ENCODE measurements at regions of chr1 and their contacts with region 1.

Region 1: GRCh38 chr1:55021965-55022546 is 17.3 kb upstream of the PCSK9 start:
- DNase-seq: peak; percentile 72
- H3K4me3 ChIP-seq: no peak overlapping the region
- H3K27ac ChIP-seq: no peak overlapping the region
- H3K4me1 ChIP-seq: no peaks in the 10 kb centered on the region
- H3K27me3 ChIP-seq: peaks cover 0 to 2% of the 10 kb centered on the region in 2 experiments
- CTCF ChIP-seq: peak; percentile 94 to 98
- POLR2A ChIP-seq: no peak

Region 2: GRCh38 chr1:54671985-54672608 is 350.0 kb before region 1 on chr1:
- CTCF ChIA-PET with region 1: interaction called, 3 read pairs
- POLR2A ChIA-PET with region 1: no interaction called
- dilution Hi-C with region 1: no loop called
- intact Hi-C with region 1: loop called (anchors 1 kb)
- DNase-seq: peak; percentile 49
- H3K4me3 ChIP-seq: no peak overlapping the region
- H3K27ac ChIP-seq: no peak overlapping the region
- H3K4me1 ChIP-seq: no peaks in the 10 kb centered on the region
- H3K27me3 ChIP-seq: peaks cover 0 to 2% of the 10 kb centered on the region in 2 experiments
- CTCF ChIP-seq: peak; percentile 63 to 78
- POLR2A ChIP-seq: no peak

Region 3: DNA sequence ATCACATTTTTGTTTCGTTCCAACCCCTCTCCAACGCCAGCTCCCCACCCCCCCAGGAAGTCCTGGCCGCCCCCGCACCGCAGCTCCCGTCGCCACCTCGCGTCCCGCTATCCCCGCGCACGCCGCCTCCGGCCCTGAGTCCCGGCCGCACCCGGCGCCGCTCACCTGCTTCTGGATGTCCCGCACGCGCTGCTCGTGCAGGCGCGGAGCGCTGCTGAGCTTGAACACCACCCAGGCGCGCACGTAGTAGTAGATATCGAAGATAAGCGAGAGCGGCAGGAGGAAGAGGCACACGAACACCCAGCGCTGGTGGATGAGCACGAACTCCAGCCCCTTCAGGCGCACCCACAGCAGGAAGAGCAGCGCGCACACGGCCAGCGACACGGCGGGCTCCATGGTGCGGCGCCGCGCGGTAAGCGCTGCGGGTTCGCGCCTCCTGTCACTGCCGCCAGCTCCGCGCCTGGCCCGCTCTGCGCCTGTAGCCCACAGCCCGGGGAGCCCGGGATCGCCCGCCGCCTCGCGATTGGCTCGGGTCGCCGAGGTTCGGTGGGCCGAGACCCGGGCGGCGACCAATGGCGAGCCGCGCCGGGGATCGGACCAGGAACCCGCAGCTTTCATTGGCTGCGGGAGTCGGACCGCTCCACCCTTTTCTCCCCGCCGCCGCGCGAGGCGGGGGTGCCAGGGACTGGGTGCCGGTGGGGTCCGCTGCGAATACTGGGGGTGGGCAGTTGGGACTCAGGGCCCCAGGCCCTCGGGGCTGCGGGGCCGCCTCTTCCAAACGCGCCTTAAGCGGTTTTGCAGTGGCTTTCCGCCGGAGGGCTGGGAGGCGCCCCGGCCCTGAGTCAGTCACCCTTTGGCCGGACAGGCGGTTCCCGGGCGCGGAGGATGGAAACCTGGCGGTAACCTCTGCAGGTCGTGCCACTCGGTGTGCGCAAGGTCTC is 135.1 kb before region 1 on chr1 and contains the start of gene DHCR24:
- CTCF ChIA-PET with region 1: interaction called, 7 read pairs
- POLR2A ChIA-PET with region 1: no interaction called
- dilution Hi-C with region 1: no loop called
- intact Hi-C with region 1: loop called (anchors 2 kb)
- DNase-seq: peak; percentile 85
- H3K4me3 ChIP-seq: peak within 1 kb of the TSS; percentile 52 to 78 (median 56)
- H3K27ac ChIP-seq: peak within 1 kb of the TSS; percentile 25
- H3K4me1 ChIP-seq: peaks cover 32% of the 10 kb centered on the region
- H3K27me3 ChIP-seq: no peaks in the 10 kb centered on the region
- CTCF ChIP-seq: no peak
- POLR2A ChIP-seq: peak; percentile 77
- total RNA-seq, gene DHCR24: 223 and 229 TPM in 2 replicates

Region 4: DNA sequence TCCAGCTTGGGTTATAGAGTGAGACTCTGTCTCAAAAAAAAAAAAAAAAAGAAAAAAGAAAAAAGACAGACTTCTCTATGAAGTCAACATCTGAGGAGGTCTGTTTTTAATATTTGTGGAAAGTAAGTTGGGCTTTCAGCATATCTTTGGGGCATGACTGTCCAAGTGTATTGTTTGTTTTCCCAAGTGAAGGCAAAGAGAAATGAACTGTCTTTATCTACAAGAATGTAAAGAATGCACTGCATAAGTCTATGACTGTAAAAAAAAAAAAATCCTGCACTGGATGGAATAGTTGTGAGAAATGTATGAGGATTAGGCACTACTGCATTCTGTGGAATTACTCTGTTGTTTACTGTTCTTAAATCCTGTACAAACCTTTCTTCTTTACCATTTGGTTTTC is 87.2 kb before region 1 on chr1:
- CTCF ChIA-PET with region 1: interaction called, 35 read pairs
- POLR2A ChIA-PET with region 1: no interaction called
- dilution Hi-C with region 1: no loop called
- intact Hi-C with region 1: no loop called
- DNase-seq: peak; percentile 37
- H3K4me3 ChIP-seq: no peak overlapping the region
- H3K27ac ChIP-seq: no peak overlapping the region
- H3K4me1 ChIP-seq: peaks cover 2% of the 10 kb centered on the region
- H3K27me3 ChIP-seq: peaks cover 2 to 10% of the 10 kb centered on the region in 2 experiments
- CTCF ChIP-seq: no peak
- POLR2A ChIP-seq: no peak

Region 5: GRCh38 chr1:54950369-54951163 is 71.5 kb before region 1 on chr1:
- CTCF ChIA-PET with region 1: interaction called, 587 read pairs
- POLR2A ChIA-PET with region 1: interaction called, 5 read pairs
- dilution Hi-C with region 1: no loop called
- intact Hi-C with region 1: loop called (anchors 1 kb)
- DNase-seq: peak; percentile 87
- H3K4me3 ChIP-seq: no peak overlapping the region
- H3K27ac ChIP-seq: peak overlapping the region; percentile 15
- H3K4me1 ChIP-seq: peaks cover 25% of the 10 kb centered on the region
- H3K27me3 ChIP-seq: peaks cover 0 to 1% of the 10 kb centered on the region in 2 experiments
- CTCF ChIP-seq: peak; percentile 71 to 79
- POLR2A ChIP-seq: no peak

Region 6: DNA sequence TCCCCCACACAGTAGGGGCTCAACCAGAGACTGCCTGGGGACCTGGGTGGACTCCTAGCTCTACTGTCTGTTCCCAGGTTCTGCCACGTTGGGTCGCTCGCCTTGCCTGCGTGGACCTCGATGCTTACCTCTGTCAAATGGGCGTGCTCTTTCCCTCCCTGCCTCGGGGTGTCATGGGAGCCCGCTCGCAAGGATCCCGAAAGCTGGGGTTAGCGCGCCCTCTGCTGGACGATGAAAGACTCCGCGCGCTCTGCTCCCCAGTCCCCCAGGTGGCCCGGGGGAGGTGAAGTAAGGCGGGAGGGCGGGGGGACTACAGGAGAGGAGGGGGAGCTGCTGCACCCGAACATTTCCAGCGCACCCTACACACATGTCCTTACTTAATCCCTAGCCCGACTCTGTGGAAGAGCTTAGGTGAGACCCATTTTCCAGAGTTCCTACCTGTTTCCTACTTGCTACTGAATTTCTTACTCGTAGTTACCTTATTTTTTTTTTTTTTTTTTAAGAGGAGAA is 25.6 kb before region 1 on chr1:
- CTCF ChIA-PET with region 1: interaction called, 19 read pairs
- POLR2A ChIA-PET with region 1: no interaction called
- dilution Hi-C with region 1: no loop called
- intact Hi-C with region 1: loop called (anchors 1 kb)
- DNase-seq: peak; percentile 59
- H3K4me3 ChIP-seq: no peak overlapping the region
- H3K27ac ChIP-seq: no peak overlapping the region
- H3K4me1 ChIP-seq: peaks cover 3% of the 10 kb centered on the region
- H3K27me3 ChIP-seq: peaks cover 12 to 14% of the 10 kb centered on the region in 2 experiments
- CTCF ChIP-seq: peak; percentile 77 to 87
- POLR2A ChIP-seq: no peak

Region 7: DNA sequence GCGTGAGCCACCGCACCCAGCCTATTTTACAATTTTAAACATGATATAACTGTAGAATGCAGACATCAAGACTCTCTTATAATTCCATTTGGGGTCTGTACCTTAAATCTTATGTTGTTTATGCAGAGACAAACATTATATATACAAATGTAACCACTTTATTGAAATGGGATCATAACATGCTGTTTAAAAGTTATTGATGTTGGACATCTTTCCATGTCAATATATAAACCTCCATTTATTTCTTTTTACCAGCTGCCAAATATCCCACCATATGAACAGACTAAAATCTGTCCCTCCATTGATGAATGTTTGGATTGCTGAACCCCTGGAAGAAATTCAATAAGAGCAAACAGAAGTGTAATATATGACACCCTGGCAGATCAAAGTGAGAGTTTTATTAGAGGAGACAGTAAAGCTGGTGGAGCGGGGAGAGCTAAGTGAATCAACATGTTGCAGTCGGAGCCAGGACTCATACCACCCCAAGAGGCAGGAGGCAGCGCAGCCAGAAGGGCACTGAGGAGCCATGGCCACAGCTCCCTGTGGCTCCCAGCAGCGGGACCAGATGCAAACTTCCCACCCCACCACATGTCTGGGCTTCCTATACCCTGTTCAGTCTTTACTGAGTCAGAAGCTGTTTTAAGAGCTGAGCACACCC is 12.5 kb after region 1 on chr1:
- CTCF ChIA-PET with region 1: interaction called, 12 read pairs
- POLR2A ChIA-PET with region 1: no interaction called
- dilution Hi-C with region 1: no loop called
- intact Hi-C with region 1: no loop called
- DNase-seq: no peak
- H3K4me3 ChIP-seq: no peak overlapping the region
- H3K27ac ChIP-seq: no peak overlapping the region
- H3K4me1 ChIP-seq: peaks cover under 1% of the 10 kb centered on the region
- H3K27me3 ChIP-seq: peaks cover 42 to 54% of the 10 kb centered on the region in 2 experiments
- CTCF ChIP-seq: no peak
- POLR2A ChIP-seq: no peak

Region 8: DNA sequence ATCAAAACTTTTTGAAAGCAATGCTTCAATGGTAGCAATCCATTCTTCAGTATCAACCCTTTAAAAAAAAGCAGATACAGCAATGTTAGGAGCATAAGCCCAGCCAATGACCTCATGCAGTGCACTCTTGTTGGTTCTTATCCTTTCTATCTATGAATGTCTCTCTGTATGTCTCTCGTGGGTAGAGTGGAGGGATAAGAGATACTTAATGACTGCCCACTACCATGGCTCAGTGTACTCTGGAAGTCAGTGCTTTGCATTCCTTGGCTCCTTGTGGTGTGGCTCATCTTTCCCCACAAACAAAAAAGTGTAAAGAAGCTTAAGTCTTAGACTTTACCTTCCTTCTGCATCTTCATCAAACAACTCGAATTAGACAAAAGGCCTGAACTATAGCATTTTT is 67.6 kb after region 1 on chr1:
- CTCF ChIA-PET with region 1: no interaction called
- POLR2A ChIA-PET with region 1: no interaction called
- dilution Hi-C with region 1: no loop called
- intact Hi-C with region 1: no loop called
- DNase-seq: no peak
- H3K4me3 ChIP-seq: no peak overlapping the region
- H3K27ac ChIP-seq: no peak overlapping the region
- H3K4me1 ChIP-seq: no peaks in the 10 kb centered on the region
- H3K27me3 ChIP-seq: no peaks in the 10 kb centered on the region
- CTCF ChIP-seq: no peak
- POLR2A ChIP-seq: no peak

Measured in endothelial cell of umbilical vein (primary cell).